ENCODE measurements at regions of chr19 and their contacts with region 1.

Region 1: GRCh38 chr19:16153582-16154336 is 10.3 kb downstream of the HSH2D start:
- DNase-seq: peak; percentile 47
- ATAC-seq: peak; percentile 40
- H3K4me3 Mint-ChIP-seq: no peak overlapping the region
- H3K27ac Mint-ChIP-seq: no peak overlapping the region
- H3K4me1 Mint-ChIP-seq: peaks cover 4% of the 10 kb centered on the region
- H3K27me3 Mint-ChIP-seq: no peaks in the 10 kb centered on the region
- CTCF ChIP-seq: no peak

Region 2: DNA sequence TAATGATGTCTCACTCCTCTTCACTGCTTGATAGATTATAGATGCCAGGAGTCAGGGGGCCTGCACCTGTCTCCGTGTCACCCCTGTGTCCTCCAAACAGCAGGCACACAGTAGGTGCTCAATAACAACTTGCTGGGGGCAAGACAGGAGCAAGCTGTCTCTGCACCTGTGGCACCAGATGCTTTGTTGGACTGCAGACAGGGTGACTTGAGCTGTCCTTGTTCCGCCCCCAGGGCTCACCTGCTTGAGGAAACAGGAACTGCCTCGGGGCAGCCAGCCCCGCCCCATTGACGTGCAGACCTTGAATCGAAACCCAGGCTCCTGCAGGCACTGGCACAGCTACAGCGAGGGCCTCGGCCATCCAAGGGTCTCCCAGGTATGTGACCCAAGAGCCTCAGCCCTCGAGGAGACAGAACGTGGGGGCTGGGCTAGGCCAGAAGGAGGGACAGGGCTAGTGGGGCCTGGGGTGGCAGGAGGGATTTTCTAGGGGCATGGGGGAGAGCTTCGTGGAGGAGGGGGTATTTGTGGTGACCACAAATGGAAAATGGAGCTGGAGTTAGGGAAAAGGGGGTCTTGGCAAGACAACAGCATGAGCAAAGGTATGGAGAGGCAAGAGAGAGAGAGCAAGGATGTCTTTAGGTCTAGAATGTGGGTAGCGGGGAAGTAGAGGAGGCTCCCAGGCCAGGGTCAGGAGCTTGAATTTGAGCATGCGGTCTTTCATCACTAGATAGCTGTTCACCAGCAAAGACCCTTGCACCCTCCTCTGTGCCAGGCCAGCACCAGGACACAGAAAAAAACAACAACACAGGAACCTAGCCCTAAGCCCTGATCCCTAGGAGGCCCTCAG is 10.1 kb before region 1 on chr19 and contains the start of gene HSH2D:
- CTCF ChIA-PET with region 1: no interaction called
- POLR2A ChIA-PET with region 1: interaction called, 12 read pairs
- intact Hi-C with region 1: no loop called
- DNase-seq: peak; percentile 94
- ATAC-seq: peak; percentile 99
- H3K4me3 Mint-ChIP-seq: peak within 1 kb of the TSS; percentile 98
- H3K27ac Mint-ChIP-seq: peak within 1 kb of the TSS; percentile 98
- H3K4me1 Mint-ChIP-seq: peaks cover 34% of the 10 kb centered on the region
- H3K27me3 Mint-ChIP-seq: no peaks in the 10 kb centered on the region
- CTCF ChIP-seq: no peak
- total RNA-seq, gene HSH2D: 23.5 to 25.5 TPM

Region 3: GRCh38 chr19:16168465-16169081 is 14.8 kb after region 1 on chr19:
- CTCF ChIA-PET with region 1: no interaction called
- POLR2A ChIA-PET with region 1: no interaction called
- intact Hi-C with region 1: no loop called
- DNase-seq: no peak
- ATAC-seq: peak; percentile 47
- H3K4me3 Mint-ChIP-seq: no peak overlapping the region
- H3K27ac Mint-ChIP-seq: peak overlapping the region; percentile 49
- H3K4me1 Mint-ChIP-seq: peaks cover 8% of the 10 kb centered on the region
- H3K27me3 Mint-ChIP-seq: no peaks in the 10 kb centered on the region
- CTCF ChIP-seq: no peak